Naive thymus-derived CD4-positive, alpha-beta T cell (primary cell): ENCODE measurements at regions of chr1 and their contacts with region 1.

Region 1: GRCh38 chr1:33306648-33307493 is 14.0 kb downstream of the A3GALT2 start:
- DNase-seq: peak in 1 of 9 donors; percentile 19
- ATAC-seq: no peak
- H3K4me3 ChIP-seq: no peak overlapping the region
- H3K4me3 Mint-ChIP-seq: peak overlapping the region in 2 of 10 donors; percentile 19 to 51
- H3K27ac ChIP-seq: no peak overlapping the region
- H3K27ac Mint-ChIP-seq: no peak overlapping the region
- H3K4me1 ChIP-seq: peaks cover 8% of the 10 kb centered on the region in 2 donors
- H3K4me1 Mint-ChIP-seq: peaks cover 7 to 25% (median 20%) of the 10 kb centered on the region in 7 donors
- H3K27me3 ChIP-seq: no peaks in the 10 kb centered on the region
- H3K27me3 Mint-ChIP-seq: peaks cover 9 to 22% (median 13%) of the 10 kb centered on the region in 5 donors

Region 2: GRCh38 chr1:32830092-32830852 is 476.6 kb before region 1 on chr1:
- CTCF ChIA-PET with region 1: no interaction called
- POLR2A ChIA-PET with region 1: no interaction called
- intact Hi-C with region 1: no loop called
- DNase-seq: no peak
- ATAC-seq: no peak
- H3K4me3 ChIP-seq: no peak overlapping the region
- H3K4me3 Mint-ChIP-seq: peak overlapping the region in 2 of 10 donors; percentile 17 to 35
- H3K27ac ChIP-seq: no peak overlapping the region
- H3K27ac Mint-ChIP-seq: peak overlapping the region in 5 of 9 donors; percentile 9 to 66 (median 41)
- H3K4me1 ChIP-seq: no peaks in the 10 kb centered on the region
- H3K4me1 Mint-ChIP-seq: peaks cover 9 to 18% (median 14%) of the 10 kb centered on the region in 7 donors
- H3K27me3 ChIP-seq: no peaks in the 10 kb centered on the region
- H3K27me3 Mint-ChIP-seq: no peaks in the 10 kb centered on the region

Region 3: GRCh38 chr1:33289613-33290154 is 17.2 kb before region 1 on chr1:
- CTCF ChIA-PET with region 1: interaction called, 3 read pairs
- POLR2A ChIA-PET with region 1: no interaction called
- intact Hi-C with region 1: loop called in 1 of 2 experiments (anchors 2 kb)
- DNase-seq: no peak
- ATAC-seq: no peak
- H3K4me3 ChIP-seq: no peak overlapping the region
- H3K4me3 Mint-ChIP-seq: no peak overlapping the region
- H3K27ac ChIP-seq: no peak overlapping the region
- H3K27ac Mint-ChIP-seq: peak overlapping the region in 2 of 9 donors; percentile 59 to 69
- H3K4me1 ChIP-seq: no peaks in the 10 kb centered on the region
- H3K4me1 Mint-ChIP-seq: peaks cover 0 to 14% (median 9%) of the 10 kb centered on the region in 7 donors
- H3K27me3 ChIP-seq: no peaks in the 10 kb centered on the region
- H3K27me3 Mint-ChIP-seq: no peaks in the 10 kb centered on the region